Panc1 (cell line): ENCODE measurements at regions of chr6 and their contacts with region 1.

Region 1: GRCh38 chr6:110671116-110671846 is 144.0 kb downstream of the CDK19 start:
- DNase-seq: no peak
- ATAC-seq: no peak
- H3K4me3 ChIP-seq: no peak overlapping the region
- H3K27ac ChIP-seq: no peak overlapping the region
- H3K4me1 ChIP-seq: peaks cover 3% of the 10 kb centered on the region; the same call in 1 of the 2 replicates
- H3K27me3 ChIP-seq: no peaks in the 10 kb centered on the region
- CTCF ChIP-seq: no peak

Region 2: GRCh38 chr6:110537208-110538123 is 133.8 kb before region 1 on chr6:
- CTCF ChIA-PET with region 1: no interaction called
- POLR2A ChIA-PET with region 1: no interaction called
- in situ Hi-C with region 1: loop called (anchors 10 kb)
- intact Hi-C with region 1: no loop called
- DNase-seq: peak; percentile 83
- ATAC-seq: peak; percentile 85
- H3K4me3 ChIP-seq: no peak overlapping the region
- H3K27ac ChIP-seq: peak overlapping the region; percentile 52
- H3K4me1 ChIP-seq: peaks cover 8% of the 10 kb centered on the region
- H3K27me3 ChIP-seq: no peaks in the 10 kb centered on the region
- CTCF ChIP-seq: no peak

Region 3: DNA sequence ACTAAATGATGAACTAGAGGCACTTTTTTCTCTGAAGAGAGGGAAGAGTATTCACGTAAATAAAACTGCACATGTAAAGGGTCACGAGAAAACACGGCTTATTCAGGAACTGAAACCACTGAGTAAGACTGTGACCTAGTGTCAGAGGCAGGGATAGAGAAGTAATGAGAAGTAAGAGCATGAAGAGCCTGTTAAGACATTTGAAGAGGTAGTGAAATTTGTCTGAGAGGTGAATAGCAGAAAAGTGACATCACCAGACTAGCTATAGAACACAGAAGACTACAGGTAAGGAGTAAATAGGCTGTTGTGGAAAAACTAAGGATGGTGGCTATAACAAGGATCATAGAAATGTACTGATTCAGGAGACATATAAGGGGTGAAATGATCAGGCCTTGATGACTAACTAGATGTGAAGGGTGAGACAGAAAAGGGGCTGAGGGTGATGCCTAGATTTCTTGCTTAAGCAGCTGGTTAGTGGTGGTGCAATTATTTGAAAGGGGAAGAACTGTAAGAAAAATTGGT is 735.0 kb after region 1 on chr6:
- CTCF ChIA-PET with region 1: no interaction called
- POLR2A ChIA-PET with region 1: no interaction called
- in situ Hi-C with region 1: no loop called
- intact Hi-C with region 1: loop called (anchors 10 kb)
- DNase-seq: no peak
- ATAC-seq: peak; percentile 12; the same call in 1 of the 2 replicates
- H3K4me3 ChIP-seq: no peak overlapping the region
- H3K27ac ChIP-seq: no peak overlapping the region
- H3K4me1 ChIP-seq: no peaks in the 10 kb centered on the region
- H3K27me3 ChIP-seq: no peaks in the 10 kb centered on the region
- CTCF ChIP-seq: no peak